ENCODE measurements at regions of chr7 and their contacts with region 1.

Region 1: DNA sequence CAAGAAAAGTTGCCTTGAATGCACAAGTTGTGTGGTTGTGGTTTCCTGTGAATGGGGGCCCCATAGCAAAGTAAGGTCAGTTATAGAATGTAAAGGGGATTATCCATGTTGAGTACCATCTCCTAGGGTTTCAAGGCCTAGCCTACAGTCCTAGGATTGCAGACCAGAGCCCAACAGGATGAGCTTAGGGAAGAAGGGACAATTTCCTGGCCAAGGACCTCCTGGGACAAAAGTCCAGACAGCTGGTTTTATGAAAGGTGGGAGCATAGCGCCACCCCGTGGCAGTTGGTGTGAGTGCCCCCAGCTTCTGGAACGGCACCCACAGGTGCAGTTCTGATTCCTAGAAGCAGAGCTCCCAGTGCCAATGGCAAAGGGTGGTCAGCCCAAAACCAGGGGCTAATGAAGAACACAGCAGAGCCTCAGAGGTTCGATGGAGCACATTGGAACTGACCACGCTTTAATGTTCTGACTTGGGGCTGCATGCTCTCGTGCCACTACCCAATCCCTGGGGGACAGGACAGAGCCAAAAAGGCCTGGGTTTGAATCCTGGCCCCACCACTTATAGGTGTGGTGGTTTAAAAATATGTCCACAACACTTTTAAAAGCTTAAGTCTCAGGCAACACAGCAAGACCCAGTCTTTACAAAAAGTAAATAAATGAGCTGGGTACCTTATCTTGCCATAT is 25.8 kb upstream of the TMEM120A start:
- DNase-seq: peak; percentile 91
- H3K4me3 ChIP-seq: no peak overlapping the region
- H3K27ac ChIP-seq: no peak overlapping the region
- H3K4me1 ChIP-seq: peaks cover 5 to 30% (median 19%) of the 10 kb centered on the region in 6 donors
- H3K27me3 ChIP-seq: no peaks in the 10 kb centered on the region
- CTCF ChIP-seq: peak; percentile 79 to 94 (median 88)
- POLR2A ChIP-seq: no peak

Region 2: GRCh38 chr7:75866489-75867389 is 153.4 kb before region 1 on chr7:
- intact Hi-C with region 1: loop called (anchors 2 kb)
- DNase-seq: peak; percentile 82
- H3K4me3 ChIP-seq: peak overlapping the region in 1 of 8 donors; percentile 25
- H3K27ac ChIP-seq: peak overlapping the region in 2 of 8 donors; percentile 11 to 57
- H3K4me1 ChIP-seq: peaks cover 7 to 25% (median 14%) of the 10 kb centered on the region in 6 donors
- H3K27me3 ChIP-seq: no peaks in the 10 kb centered on the region
- CTCF ChIP-seq: peak; percentile 63 to 92 (median 76)
- POLR2A ChIP-seq: no peak

Region 3: GRCh38 chr7:76244781-76245391 is 224.7 kb after region 1 on chr7:
- intact Hi-C with region 1: no loop called
- DNase-seq: no peak
- H3K4me3 ChIP-seq: no peak overlapping the region
- H3K27ac ChIP-seq: no peak overlapping the region
- H3K4me1 ChIP-seq: no peaks in the 10 kb centered on the region
- H3K27me3 ChIP-seq: peaks cover 0 to 6% (median 0%) of the 10 kb centered on the region in 7 donors
- CTCF ChIP-seq: no peak
- POLR2A ChIP-seq: no peak

Measured in spleen (tissue), 13 donors.